HepG2 (cell line): ENCODE measurements at regions of chr1 and their contacts with region 1.

Region 1: DNA sequence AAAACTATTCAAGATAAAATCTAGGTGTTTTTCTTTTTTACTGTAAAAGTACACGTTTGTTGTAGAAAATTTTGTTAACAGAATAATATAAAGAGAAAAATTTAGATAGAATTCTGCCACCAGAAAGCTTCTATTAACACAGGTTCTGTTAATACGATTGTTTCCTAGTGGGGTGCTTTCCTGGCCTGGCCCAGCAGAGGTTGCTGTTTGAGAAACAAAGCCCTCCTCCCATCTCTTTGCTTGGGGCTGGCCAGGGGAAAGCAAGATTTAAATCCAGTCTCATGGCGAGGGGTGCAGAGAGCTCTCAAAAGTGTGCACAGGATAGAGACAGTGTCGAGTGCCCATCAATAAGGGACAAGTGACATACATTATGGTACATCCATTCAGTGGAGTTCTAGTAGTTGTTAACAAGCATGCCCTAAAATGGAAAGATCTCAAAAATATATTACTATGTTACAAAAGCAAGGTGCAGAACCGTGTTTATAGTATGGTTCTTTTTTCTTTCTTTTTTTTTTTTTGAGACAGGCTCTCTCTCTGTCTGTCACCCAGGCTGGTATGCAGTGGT is 14.6 kb upstream of the ACBD3 start:
- DNase-seq: no peak
- ATAC-seq: peak; percentile 77
- H3K4me3 ChIP-seq: no peak overlapping the region
- H3K27ac ChIP-seq: no peak overlapping the region
- H3K4me1 ChIP-seq: peaks cover 6% of the 10 kb centered on the region; the same call in 1 of the 2 replicates
- H3K27me3 ChIP-seq: no peaks in the 10 kb centered on the region
- CTCF ChIP-seq: peak; percentile 76
- EP300 ChIP-seq: no peak
- POLR2A ChIP-seq: no peak
- RAD21 ChIP-seq: no peak

Region 2: GRCh38 chr1:226029093-226029496 is 172.0 kb before region 1 on chr1:
- CTCF ChIA-PET with region 1: no interaction called
- POLR2A ChIA-PET with region 1: no interaction called
- in situ Hi-C with region 1: no loop called
- intact Hi-C with region 1: no loop called
- DNase-seq: peak; percentile 63
- ATAC-seq: peak; percentile 77
- H3K4me3 ChIP-seq: peak overlapping the region in 2 of 3 experiments; percentile 5 to 6; a peak in 2 of 6 replicates
- H3K27ac ChIP-seq: no peak overlapping the region
- H3K4me1 ChIP-seq: peaks cover 27% of the 10 kb centered on the region
- H3K27me3 ChIP-seq: peaks cover 1 to 5% of the 10 kb centered on the region in 2 experiments; a peak in 1 of 5 replicates
- CTCF ChIP-seq: no peak
- EP300 ChIP-seq: no peak
- POLR2A ChIP-seq: no peak
- RAD21 ChIP-seq: no peak

Region 3: DNA sequence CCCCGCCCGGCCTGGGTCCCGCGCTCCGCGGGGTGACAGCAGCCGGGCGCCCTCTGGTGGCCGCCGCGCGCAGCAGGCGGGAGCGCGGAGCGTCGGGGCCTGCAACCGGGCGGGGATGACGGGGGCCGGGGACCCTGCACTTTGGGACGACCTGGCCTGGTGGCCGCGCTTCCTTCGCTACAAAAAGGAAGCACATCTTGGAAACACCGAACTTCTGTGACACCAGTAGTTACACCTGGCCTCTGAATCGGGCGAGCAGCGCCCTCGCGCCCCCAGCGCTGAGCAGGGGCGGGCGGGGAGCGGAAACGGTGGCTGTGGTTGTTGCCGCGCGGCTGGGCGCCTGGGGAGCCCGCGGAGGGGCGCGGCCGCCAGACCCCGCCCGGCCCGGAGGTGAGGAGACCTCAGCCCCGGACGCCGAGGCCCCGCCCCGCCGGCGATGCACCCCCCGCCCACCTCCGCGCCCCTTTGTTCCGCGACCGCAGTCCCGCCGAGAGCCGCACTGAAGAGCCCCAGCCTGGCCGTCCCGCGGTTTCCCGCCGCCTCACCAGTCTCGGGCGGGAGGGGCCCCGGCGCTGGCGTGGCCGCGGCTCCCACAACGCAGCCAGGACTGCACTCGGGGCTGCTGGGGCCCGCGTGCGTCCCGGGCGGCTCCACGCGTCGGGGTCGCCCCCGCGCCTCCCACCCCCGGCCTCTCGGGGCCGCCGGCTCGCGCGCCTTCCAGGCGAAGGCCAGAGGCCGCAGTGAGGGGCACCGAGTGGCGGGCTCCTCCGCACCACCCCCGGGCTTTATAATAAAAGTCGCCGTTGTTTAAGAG is 79.3 kb before region 1 on chr1:
- CTCF ChIA-PET with region 1: interaction called, 28 read pairs
- POLR2A ChIA-PET with region 1: interaction called, 3 read pairs
- in situ Hi-C with region 1: no loop called
- intact Hi-C with region 1: loop called (anchors 1 kb)
- DNase-seq: peak; percentile 49
- ATAC-seq: peak; percentile 69
- H3K4me3 ChIP-seq: peak overlapping the region; percentile 49 to 81 (median 78); a peak in 5 of 6 replicates
- H3K27ac ChIP-seq: peak overlapping the region; percentile 88
- H3K4me1 ChIP-seq: peaks cover 51% of the 10 kb centered on the region
- H3K27me3 ChIP-seq: peaks cover 2 to 41% of the 10 kb centered on the region in 2 experiments; a peak in 4 of 5 replicates
- CTCF ChIP-seq: peak; percentile 78
- EP300 ChIP-seq: no peak
- POLR2A ChIP-seq: peak; percentile 45 to 56; a peak in 2 of 4 replicates
- RAD21 ChIP-seq: peak; percentile 91

Region 4: GRCh38 chr1:226157761-226158316 is 43.3 kb before region 1 on chr1:
- CTCF ChIA-PET with region 1: no interaction called
- POLR2A ChIA-PET with region 1: no interaction called
- in situ Hi-C with region 1: no loop called
- intact Hi-C with region 1: no loop called
- DNase-seq: no peak
- ATAC-seq: no peak
- H3K4me3 ChIP-seq: no peak overlapping the region
- H3K27ac ChIP-seq: no peak overlapping the region
- H3K4me1 ChIP-seq: peaks cover 11% of the 10 kb centered on the region
- H3K27me3 ChIP-seq: no peaks in the 10 kb centered on the region
- CTCF ChIP-seq: no peak
- EP300 ChIP-seq: no peak
- POLR2A ChIP-seq: no peak
- RAD21 ChIP-seq: no peak

Region 5: DNA sequence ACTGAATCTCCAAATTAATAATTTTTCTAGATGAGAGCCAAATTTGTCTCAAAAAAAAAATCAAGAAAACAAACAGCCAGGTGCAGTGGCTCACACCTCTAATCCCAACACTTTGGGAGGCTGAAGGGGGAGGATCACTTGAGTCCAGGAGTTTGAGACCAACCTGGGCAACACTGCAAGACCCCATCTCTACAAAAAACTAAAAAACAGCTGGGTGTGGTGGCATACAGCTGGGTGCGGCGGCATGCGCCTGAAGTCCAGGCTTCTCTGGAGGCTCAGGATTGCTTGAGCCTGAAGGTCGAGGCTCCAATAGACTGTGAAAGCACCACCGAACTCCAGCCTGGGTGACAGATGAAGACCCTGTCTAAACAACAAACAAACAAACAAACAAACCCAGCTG is 28.5 kb before region 1 on chr1:
- CTCF ChIA-PET with region 1: no interaction called
- POLR2A ChIA-PET with region 1: no interaction called
- in situ Hi-C with region 1: no loop called
- intact Hi-C with region 1: no loop called
- DNase-seq: no peak
- ATAC-seq: no peak
- H3K4me3 ChIP-seq: no peak overlapping the region
- H3K27ac ChIP-seq: no peak overlapping the region
- H3K4me1 ChIP-seq: 0 out of 2 replicates have a peak, but pooled peaks cover 1% of the 10 kb centered on the region
- H3K27me3 ChIP-seq: no peaks in the 10 kb centered on the region
- CTCF ChIP-seq: no peak
- EP300 ChIP-seq: no peak
- POLR2A ChIP-seq: no peak
- RAD21 ChIP-seq: no peak

Region 6: DNA sequence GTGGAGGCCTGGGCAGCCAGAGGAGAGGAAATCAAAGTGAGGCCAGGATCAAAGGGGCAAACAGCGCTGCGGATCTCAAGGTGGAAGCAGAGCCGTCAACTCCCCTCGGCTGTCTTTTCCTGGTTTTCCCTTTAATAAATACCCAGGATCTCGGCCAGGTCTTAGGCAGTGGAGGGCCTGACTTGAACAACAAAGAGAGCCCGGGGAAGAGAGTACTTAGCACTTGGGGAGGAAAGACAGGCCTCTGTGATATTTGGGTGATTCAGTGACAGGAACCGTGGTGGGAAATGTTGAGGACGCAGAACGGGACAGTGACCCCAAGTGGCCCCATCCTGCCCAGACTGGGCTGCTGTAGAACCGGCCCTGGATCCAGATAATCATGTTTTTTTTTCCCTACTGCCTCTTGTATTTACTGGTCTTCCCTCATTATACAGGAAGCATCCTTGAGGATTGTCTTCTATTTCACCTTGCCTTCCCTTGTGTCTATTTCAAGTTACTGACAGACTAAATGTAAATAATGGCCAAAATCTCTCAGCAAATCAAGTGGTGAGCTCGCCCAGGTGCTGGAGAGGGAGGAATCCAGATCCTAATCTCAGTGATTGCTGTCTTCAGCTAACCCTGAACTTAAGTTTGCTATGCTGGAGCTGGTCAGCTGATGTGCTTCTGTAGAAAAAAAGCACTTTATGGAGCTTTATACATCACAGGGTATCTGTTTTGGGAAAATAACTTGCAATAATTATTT is 19.5 kb after region 1 on chr1:
- CTCF ChIA-PET with region 1: no interaction called
- POLR2A ChIA-PET with region 1: no interaction called
- in situ Hi-C with region 1: no loop called
- intact Hi-C with region 1: loop called (anchors 2 kb)
- DNase-seq: no peak
- ATAC-seq: no peak
- H3K4me3 ChIP-seq: peak overlapping the region in 2 of 3 experiments; percentile 12 to 47; a peak in 2 of 6 replicates
- H3K27ac ChIP-seq: no peak overlapping the region
- H3K4me1 ChIP-seq: peaks cover 63% of the 10 kb centered on the region
- H3K27me3 ChIP-seq: no peaks in the 10 kb centered on the region; a peak in 1 of 5 replicates
- CTCF ChIP-seq: peak; percentile 39; the same call in 1 of the 2 replicates
- EP300 ChIP-seq: no peak
- POLR2A ChIP-seq: no peak
- RAD21 ChIP-seq: no peak

Region 7: GRCh38 chr1:226248091-226248490 is 47.0 kb after region 1 on chr1:
- CTCF ChIA-PET with region 1: no interaction called
- POLR2A ChIA-PET with region 1: no interaction called
- in situ Hi-C with region 1: no loop called
- intact Hi-C with region 1: loop called (anchors 1 kb)
- DNase-seq: no peak
- ATAC-seq: no peak
- H3K4me3 ChIP-seq: no peak overlapping the region
- H3K27ac ChIP-seq: no peak overlapping the region
- H3K4me1 ChIP-seq: no peaks in the 10 kb centered on the region
- H3K27me3 ChIP-seq: no peaks in the 10 kb centered on the region
- CTCF ChIP-seq: no peak
- EP300 ChIP-seq: no peak
- POLR2A ChIP-seq: no peak
- RAD21 ChIP-seq: no peak

Region 8: DNA sequence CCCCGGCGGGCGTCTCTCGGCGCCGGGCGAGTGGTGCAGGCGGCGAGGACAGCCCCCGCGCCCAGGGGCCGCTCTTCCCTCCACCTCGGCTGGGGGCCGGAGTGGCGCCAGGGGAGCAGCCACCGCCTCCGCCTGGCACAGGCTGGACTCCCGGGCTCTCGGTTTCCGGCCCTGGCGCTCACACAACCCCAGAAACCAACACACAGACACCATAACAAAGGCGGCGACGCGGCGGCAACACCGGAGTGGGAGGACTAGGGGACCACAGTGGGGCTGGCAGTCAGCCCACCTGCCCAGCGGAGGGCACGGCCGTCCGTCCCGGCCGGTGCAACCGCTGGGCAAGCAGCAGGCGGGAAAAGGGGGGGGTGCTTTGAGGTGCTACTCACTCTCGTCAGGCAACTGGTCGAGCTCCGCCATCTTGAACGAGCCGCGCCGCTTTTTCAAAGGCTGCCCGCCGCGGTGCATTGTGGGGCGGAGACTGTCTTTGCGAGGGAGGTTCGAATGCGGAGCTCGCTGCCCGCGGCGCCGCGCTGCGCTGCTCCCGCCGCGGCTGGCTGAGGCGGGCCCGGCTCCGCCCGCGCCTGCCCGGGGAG is 107.7 kb after region 1 on chr1 and contains the start of gene LIN9:
- CTCF ChIA-PET with region 1: no interaction called
- POLR2A ChIA-PET with region 1: no interaction called
- in situ Hi-C with region 1: no loop called
- intact Hi-C with region 1: no loop called
- DNase-seq: peak; percentile 77
- ATAC-seq: peak; percentile 86
- H3K4me3 ChIP-seq: peak within 1 kb of the TSS; percentile 92 to 94 (median 93)
- H3K27ac ChIP-seq: peak within 1 kb of the TSS; percentile 87
- H3K4me1 ChIP-seq: peaks cover 34% of the 10 kb centered on the region
- H3K27me3 ChIP-seq: no peaks in the 10 kb centered on the region
- CTCF ChIP-seq: peak; percentile 23; the same call in 1 of the 2 replicates
- EP300 ChIP-seq: peak in 1 of 2 experiments; percentile 20; a peak in 1 of 4 replicates
- POLR2A ChIP-seq: peak; percentile 77 to 83
- RAD21 ChIP-seq: 0 out of 2 replicates have a peak, but pooled peaks have one; percentile 23
- total RNA-seq, gene LIN9: 10.0 and 15.8 TPM in 2 replicates

Region 9: DNA sequence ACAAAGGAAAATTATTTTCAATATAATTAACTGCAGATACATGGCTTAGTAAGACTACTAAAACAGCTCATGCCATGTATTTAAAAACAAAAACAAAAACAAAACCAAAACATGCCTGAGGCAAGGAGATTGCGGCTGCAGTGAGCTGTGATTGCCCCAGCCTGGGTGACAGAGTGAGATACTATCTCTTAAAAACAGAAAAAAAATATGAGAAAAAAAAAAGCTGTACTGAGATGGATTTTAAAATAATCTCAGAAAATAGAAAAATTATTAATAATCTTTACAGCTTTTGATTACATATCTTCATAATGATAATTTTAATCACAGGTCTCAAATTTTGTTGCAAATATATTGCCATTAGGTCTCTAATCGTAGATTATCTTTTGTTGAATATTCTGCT is 131.8 kb after region 1 on chr1:
- CTCF ChIA-PET with region 1: interaction called, 3 read pairs
- POLR2A ChIA-PET with region 1: no interaction called
- in situ Hi-C with region 1: no loop called
- intact Hi-C with region 1: loop called (anchors 5 kb)
- DNase-seq: no peak
- ATAC-seq: peak; percentile 55; the same call in 2 of the 3 replicates
- H3K4me3 ChIP-seq: peak overlapping the region; percentile 20 to 51 (median 31); a peak in 3 of 6 replicates
- H3K27ac ChIP-seq: no peak overlapping the region
- H3K4me1 ChIP-seq: peaks cover 11% of the 10 kb centered on the region
- H3K27me3 ChIP-seq: no peaks in the 10 kb centered on the region; a peak in 1 of 5 replicates
- CTCF ChIP-seq: no peak
- EP300 ChIP-seq: no peak
- POLR2A ChIP-seq: no peak
- RAD21 ChIP-seq: no peak